ENCODE measurements at regions of chr9 and their contacts with region 1.

Region 1: GRCh38 chr9:100426530-100427428 is at the start of gene MSANTD3:
- DNase-seq: peak; percentile 58
- H3K4me3 Mint-ChIP-seq: peak within 1 kb of the TSS; percentile 73
- H3K27ac Mint-ChIP-seq: peak within 1 kb of the TSS; percentile 94
- H3K4me1 Mint-ChIP-seq: peaks cover 32% of the 10 kb centered on the region
- H3K27me3 Mint-ChIP-seq: no peaks in the 10 kb centered on the region
- CTCF ChIP-seq: no peak
- total RNA-seq, gene MSANTD3: 16.3 and 23.5 TPM in 2 replicates

Region 2: DNA sequence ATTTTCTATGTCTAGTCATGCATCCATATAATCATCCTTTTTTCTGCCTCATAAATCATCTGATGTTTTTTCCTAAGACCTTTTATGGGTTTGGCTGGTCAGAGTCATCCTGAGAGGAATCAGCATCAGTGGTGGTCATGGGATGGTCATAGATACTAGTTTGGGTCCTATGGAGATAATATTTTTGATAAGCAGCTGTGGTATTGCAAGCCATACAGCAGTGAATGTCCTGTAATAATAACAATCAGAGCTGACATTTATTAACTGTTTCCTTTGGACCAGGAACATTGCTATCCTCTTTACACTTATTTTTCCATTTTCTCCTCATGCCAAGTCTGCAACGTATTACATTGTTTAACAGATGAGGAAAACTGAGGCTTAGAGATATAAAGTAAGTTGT is 157.1 kb before region 1 on chr9:
- CTCF ChIA-PET with region 1: no interaction called
- intact Hi-C with region 1: no loop called
- DNase-seq: no peak
- H3K4me3 Mint-ChIP-seq: no peak overlapping the region
- H3K27ac Mint-ChIP-seq: no peak overlapping the region
- H3K4me1 Mint-ChIP-seq: no peaks in the 10 kb centered on the region
- H3K27me3 Mint-ChIP-seq: no peaks in the 10 kb centered on the region
- CTCF ChIP-seq: no peak

Region 3: DNA sequence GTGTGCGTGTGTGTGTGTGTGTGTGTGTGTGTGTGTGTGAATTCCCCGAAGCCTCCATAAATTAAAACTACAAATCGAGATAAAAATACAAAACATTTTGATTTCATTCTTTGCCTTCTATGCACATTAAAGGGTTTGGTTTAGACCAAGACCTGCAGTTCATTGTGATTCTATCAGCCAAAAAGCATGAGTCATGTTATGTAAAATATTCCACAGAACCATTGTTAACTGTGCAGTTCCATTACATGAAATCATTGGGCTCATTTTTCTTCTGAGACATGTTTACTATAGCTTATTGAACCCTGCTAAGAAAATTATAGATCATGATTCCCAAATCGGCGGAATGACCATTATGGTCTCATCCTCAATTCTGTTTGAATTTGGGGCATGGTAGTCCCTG is 162.8 kb after region 1 on chr9:
- CTCF ChIA-PET with region 1: no interaction called
- intact Hi-C with region 1: loop called (anchors 5 kb)
- DNase-seq: no peak
- H3K4me3 Mint-ChIP-seq: no peak overlapping the region
- H3K27ac Mint-ChIP-seq: no peak overlapping the region
- H3K4me1 Mint-ChIP-seq: peaks cover 8% of the 10 kb centered on the region
- H3K27me3 Mint-ChIP-seq: no peaks in the 10 kb centered on the region
- CTCF ChIP-seq: no peak

Measured in Calu3 (cell line).